CD8-positive, alpha-beta T cell (primary cell): ENCODE measurements at regions of chr11 and their contacts with region 1.

Region 1: GRCh38 chr11:14578541-14578956 is 58.4 kb upstream of the PSMA1 start:
- DNase-seq: peak; percentile 32 to 98 (median 74)
- ATAC-seq: peak; percentile 90
- H3K4me3 ChIP-seq: no peak overlapping the region
- H3K4me3 Mint-ChIP-seq: peak overlapping the region; percentile 56
- H3K27ac ChIP-seq: peak overlapping the region; percentile 58 to 85
- H3K27ac Mint-ChIP-seq: peak overlapping the region; percentile 96
- H3K4me1 ChIP-seq: peaks cover 42% of the 10 kb centered on the region
- H3K4me1 Mint-ChIP-seq: peaks cover 64% of the 10 kb centered on the region
- H3K27me3 ChIP-seq: no peaks in the 10 kb centered on the region
- H3K27me3 Mint-ChIP-seq: no peaks in the 10 kb centered on the region
- CTCF ChIP-seq: no peak

Region 2: DNA sequence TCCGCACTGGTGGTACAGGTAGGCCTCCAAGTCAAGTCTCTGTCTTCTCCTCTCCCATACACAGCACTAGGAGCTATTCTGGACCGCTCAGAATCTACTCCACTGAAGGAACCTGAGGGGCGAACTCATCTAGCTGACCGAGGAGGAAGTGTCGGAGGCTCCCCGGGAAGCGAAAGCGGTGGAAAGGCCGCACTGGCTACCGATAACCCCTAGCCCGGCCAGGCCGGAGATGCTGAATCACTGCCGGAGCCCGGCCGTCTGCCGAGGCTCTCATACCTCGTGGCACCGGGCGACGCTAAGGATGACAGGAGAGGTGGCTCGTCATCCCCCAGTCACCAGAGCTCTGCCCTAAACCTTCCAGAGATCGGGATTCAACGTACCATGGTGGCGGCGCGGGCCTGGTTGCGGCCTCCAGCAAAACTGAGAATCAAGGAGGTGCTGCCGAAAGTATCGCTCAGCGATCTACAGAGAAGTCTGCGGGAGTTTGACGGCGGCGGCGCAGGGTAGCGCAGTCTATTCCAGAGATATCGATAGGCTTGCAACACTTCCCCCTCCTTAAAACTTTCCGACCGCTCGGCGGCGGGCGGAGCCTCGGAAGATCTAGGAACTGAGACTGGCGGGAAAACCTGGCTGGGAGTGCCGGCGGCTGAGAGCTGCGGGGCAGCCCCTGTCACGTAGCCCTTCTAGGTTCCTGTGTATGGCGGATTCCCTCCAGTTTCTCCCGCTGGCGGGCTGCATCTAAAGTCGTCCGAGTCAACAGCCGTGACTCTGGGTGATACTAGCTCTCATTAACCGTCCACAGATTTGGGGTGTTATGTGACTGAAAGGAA is 58.4 kb before region 1 on chr11 and contains the start of gene PSMA1:
- CTCF ChIA-PET with region 1: interaction called, 3 read pairs
- POLR2A ChIA-PET with region 1: no interaction called
- intact Hi-C with region 1: loop called in 1 of 2 experiments (anchors 2 kb)
- DNase-seq: peak; percentile 74 to 95 (median 90)
- ATAC-seq: peak; percentile 90
- H3K4me3 ChIP-seq: peak within 1 kb of the TSS; percentile 82 to 84
- H3K4me3 Mint-ChIP-seq: peak within 1 kb of the TSS; percentile 98
- H3K27ac ChIP-seq: peak within 1 kb of the TSS; percentile 82 to 87
- H3K27ac Mint-ChIP-seq: peak within 1 kb of the TSS; percentile 97
- H3K4me1 ChIP-seq: peaks cover 19% of the 10 kb centered on the region
- H3K4me1 Mint-ChIP-seq: peaks cover 32% of the 10 kb centered on the region
- H3K27me3 ChIP-seq: no peaks in the 10 kb centered on the region
- H3K27me3 Mint-ChIP-seq: no peaks in the 10 kb centered on the region
- CTCF ChIP-seq: no peak
- total RNA-seq, gene PSMA1: 177 to 193 TPM

Region 3: DNA sequence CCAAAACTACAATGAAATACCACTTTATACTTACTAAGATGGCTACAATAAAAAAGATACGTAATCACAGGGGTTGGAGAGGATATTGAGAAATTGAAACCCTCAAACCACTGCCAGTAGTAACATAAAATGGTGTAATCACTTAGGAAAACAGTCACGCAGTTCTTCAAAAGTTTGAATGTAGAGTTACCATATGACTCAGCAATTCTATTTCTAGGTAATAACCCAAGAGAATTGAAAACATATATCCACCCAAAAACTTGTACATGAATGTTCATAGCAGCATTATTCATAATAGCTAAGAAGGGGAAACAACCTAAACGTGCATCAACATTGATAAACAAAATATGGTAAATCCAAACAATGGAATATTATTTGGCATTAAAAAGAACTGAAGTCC is 33.9 kb before region 1 on chr11:
- CTCF ChIA-PET with region 1: interaction called, 6 read pairs
- POLR2A ChIA-PET with region 1: interaction called, 5 read pairs
- intact Hi-C with region 1: loop called in 1 of 2 experiments (anchors 5 kb)
- DNase-seq: peak in 2 of 9 experiments; percentile 5 to 26
- ATAC-seq: no peak
- H3K4me3 ChIP-seq: no peak overlapping the region
- H3K4me3 Mint-ChIP-seq: no peak overlapping the region
- H3K27ac ChIP-seq: no peak overlapping the region
- H3K27ac Mint-ChIP-seq: no peak overlapping the region
- H3K4me1 ChIP-seq: peaks cover 10% of the 10 kb centered on the region
- H3K4me1 Mint-ChIP-seq: peaks cover 35% of the 10 kb centered on the region
- H3K27me3 ChIP-seq: no peaks in the 10 kb centered on the region
- H3K27me3 Mint-ChIP-seq: no peaks in the 10 kb centered on the region
- CTCF ChIP-seq: no peak

Region 4: DNA sequence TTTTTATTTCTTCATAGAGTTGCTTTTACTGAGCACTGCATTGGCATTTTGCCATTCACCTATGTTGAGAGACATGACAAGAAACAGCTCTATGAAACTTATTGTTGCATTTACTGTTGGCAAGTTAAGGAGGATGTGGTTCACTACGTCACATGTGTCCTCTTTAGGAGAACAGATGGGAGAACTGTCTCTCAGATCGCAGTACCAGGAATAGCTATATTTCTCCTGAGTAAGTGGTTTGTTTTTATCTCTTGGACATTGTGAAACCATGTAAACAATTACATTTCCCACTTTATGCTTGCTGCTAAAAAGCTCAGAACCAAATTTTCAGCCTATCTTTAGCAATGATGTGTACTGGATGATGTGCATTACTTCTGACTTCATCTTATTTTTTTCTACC is 23.6 kb before region 1 on chr11:
- CTCF ChIA-PET with region 1: interaction called, 3 read pairs
- POLR2A ChIA-PET with region 1: interaction called, 15 read pairs
- intact Hi-C with region 1: loop called (anchors 1 kb)
- DNase-seq: peak in 4 of 9 experiments; percentile 46 to 90 (median 70)
- ATAC-seq: peak; percentile 87
- H3K4me3 ChIP-seq: no peak overlapping the region
- H3K4me3 Mint-ChIP-seq: no peak overlapping the region
- H3K27ac ChIP-seq: peak overlapping the region; percentile 53 to 67
- H3K27ac Mint-ChIP-seq: peak overlapping the region; percentile 97
- H3K4me1 ChIP-seq: peaks cover 33% of the 10 kb centered on the region
- H3K4me1 Mint-ChIP-seq: peaks cover 51% of the 10 kb centered on the region
- H3K27me3 ChIP-seq: no peaks in the 10 kb centered on the region
- H3K27me3 Mint-ChIP-seq: no peaks in the 10 kb centered on the region
- CTCF ChIP-seq: no peak

Region 5: DNA sequence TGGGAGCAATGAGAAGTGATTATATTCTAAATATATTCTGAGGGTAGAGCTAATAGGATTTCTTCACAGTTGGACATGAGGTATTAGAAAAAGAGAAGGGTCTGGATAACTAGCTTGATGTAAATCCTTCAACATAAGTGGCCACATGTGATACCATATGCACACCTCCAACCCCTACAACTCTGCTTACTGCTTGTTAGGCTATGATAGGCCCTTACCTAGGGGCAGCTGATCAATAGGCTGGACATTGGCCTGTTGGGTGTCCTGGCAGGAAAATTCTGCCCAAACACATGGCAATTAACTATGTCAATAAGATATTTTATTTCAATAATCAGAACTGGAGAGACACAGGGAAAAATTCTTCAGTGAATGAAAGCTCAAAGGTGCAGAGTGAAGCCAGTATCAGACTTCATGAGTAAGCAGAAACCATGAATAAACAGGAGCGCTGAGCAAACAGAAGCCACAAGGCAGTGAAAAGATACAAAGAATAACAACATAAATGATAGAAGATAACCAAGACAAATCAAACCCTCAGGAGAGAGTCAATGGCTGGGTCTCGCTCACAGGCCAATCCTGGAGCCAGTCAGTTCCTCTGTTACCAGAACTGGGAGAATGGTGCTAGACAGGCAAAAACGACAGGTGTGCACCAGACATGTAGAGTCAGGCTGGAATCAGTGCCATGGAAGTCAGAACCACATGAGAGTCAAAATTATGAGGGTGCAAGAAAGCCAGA is 12.1 kb before region 1 on chr11:
- CTCF ChIA-PET with region 1: interaction called, 9 read pairs
- POLR2A ChIA-PET with region 1: interaction called, 15 read pairs
- intact Hi-C with region 1: loop called in 1 of 2 experiments (anchors 1 kb)
- DNase-seq: no peak
- ATAC-seq: no peak
- H3K4me3 ChIP-seq: no peak overlapping the region
- H3K4me3 Mint-ChIP-seq: no peak overlapping the region
- H3K27ac ChIP-seq: no peak overlapping the region
- H3K27ac Mint-ChIP-seq: peak overlapping the region; percentile 66
- H3K4me1 ChIP-seq: peaks cover 40% of the 10 kb centered on the region
- H3K4me1 Mint-ChIP-seq: peaks cover 69% of the 10 kb centered on the region
- H3K27me3 ChIP-seq: no peaks in the 10 kb centered on the region
- H3K27me3 Mint-ChIP-seq: no peaks in the 10 kb centered on the region
- CTCF ChIP-seq: no peak

Region 6: DNA sequence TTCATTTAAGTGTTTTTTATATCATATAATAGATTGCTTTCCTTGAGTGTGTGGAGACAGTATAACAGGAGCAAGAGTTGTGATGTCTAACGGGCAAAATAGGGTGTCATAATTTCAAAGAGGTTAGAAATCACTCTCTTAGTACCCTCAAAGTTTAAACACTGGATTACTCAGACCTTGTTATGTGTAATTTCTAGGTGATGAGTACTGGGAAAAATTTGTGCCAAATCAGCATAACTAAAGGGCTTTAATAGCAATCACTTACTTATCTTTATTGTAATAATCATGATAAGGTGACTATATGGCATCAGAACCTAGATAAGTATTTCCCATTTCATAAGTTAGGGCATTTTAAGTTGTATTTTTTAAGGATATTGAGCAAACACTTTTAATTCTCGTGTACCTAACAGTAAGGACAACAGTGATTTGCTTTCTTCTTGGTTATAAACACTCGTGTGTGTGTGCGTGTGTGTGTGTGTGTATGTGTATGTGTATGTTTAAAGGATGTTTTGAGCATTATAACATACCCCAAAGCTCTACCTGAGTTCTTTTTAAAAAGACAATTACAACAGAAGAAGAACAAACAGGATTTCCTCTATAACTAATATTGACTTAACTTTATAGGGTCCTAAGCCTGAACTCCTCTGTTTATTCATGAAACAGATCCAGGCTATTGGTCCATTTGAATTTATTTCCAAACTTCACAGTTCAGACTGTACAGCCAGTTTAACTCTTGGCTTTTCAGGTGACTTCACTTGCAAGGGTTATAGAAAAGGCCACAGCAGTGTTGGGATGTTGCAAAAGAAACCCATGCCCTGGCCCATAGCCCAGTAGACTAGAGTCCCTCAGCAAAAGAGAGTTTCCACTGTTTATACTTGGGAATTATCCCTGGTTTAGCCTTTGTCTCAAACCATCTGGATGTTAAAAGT is 41.3 kb after region 1 on chr11:
- CTCF ChIA-PET with region 1: interaction called, 5 read pairs
- POLR2A ChIA-PET with region 1: interaction called, 4 read pairs
- intact Hi-C with region 1: loop called in 1 of 2 experiments (anchors 5 kb)
- DNase-seq: no peak
- ATAC-seq: no peak
- H3K4me3 ChIP-seq: no peak overlapping the region
- H3K4me3 Mint-ChIP-seq: no peak overlapping the region
- H3K27ac ChIP-seq: no peak overlapping the region
- H3K27ac Mint-ChIP-seq: peak overlapping the region; percentile 61
- H3K4me1 ChIP-seq: peaks cover 33% of the 10 kb centered on the region
- H3K4me1 Mint-ChIP-seq: peaks cover 84% of the 10 kb centered on the region
- H3K27me3 ChIP-seq: no peaks in the 10 kb centered on the region
- H3K27me3 Mint-ChIP-seq: no peaks in the 10 kb centered on the region
- CTCF ChIP-seq: no peak

Region 7: DNA sequence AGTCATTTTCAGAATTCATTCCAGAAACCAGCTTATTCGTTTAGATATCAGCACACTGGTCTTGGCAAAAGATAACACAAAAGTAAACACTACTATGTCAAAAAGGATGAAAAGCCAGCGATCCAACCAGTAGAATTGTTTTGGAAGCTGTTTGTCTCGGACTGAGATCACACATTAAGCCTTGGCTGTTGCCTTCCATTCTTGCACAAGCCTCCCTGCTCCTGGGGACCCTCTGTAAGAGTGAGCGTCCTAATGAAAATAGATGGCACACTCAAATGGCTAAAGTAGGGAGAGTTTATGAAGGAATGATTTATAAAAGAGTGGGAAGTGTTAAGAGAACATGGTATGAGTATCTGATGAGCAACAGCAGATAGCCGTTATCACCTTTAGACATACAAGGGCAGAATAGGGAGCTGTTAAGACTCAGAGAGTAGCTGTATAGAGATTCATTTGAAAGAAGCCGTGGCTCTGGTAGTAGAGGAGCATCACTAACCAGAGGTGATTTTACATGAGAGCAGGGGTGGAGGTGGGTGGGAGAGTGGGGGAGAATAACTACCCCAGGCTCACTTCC is 90.3 kb after region 1 on chr11:
- CTCF ChIA-PET with region 1: no interaction called
- POLR2A ChIA-PET with region 1: no interaction called
- intact Hi-C with region 1: no loop called
- DNase-seq: peak in 1 of 9 experiments; percentile 19
- ATAC-seq: peak; percentile 35
- H3K4me3 ChIP-seq: no peak overlapping the region
- H3K4me3 Mint-ChIP-seq: no peak overlapping the region
- H3K27ac ChIP-seq: no peak overlapping the region
- H3K27ac Mint-ChIP-seq: peak overlapping the region; percentile 10
- H3K4me1 ChIP-seq: peaks cover 4% of the 10 kb centered on the region
- H3K4me1 Mint-ChIP-seq: peaks cover 52% of the 10 kb centered on the region
- H3K27me3 ChIP-seq: no peaks in the 10 kb centered on the region
- H3K27me3 Mint-ChIP-seq: no peaks in the 10 kb centered on the region
- CTCF ChIP-seq: no peak

Region 8: DNA sequence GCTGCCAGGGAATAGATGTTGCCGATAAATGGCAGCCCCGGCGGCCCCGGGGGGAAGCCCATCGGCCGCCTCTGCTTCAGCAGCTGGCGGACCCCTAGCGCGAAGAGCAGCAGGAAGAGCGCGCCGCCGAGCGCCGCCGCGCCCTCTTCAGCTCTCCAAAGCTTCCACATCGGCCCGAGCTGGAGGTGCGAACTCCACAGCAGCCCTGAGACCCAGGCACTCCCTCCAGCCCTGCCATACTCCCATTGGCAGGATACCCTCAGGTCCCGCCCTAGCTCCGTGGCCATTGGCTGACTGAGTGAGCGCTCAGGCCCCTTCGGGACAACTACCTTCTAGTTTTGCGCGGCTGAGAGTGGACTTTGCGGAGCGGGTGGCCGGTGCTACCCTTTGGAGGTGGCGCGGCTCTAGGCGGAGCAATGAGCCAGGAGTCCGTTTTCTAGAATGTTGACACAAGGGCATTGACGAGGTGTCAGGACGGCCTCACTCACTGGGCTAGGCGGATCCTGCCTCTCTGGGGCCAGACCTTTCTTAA is 313.6 kb after region 1 on chr11 and contains the start of gene CYP2R1:
- CTCF ChIA-PET with region 1: no interaction called
- POLR2A ChIA-PET with region 1: interaction called, 3 read pairs
- intact Hi-C with region 1: loop called in 1 of 2 experiments (anchors 5 kb)
- DNase-seq: peak; percentile 81 to 95 (median 89)
- ATAC-seq: peak; percentile 74
- H3K4me3 ChIP-seq: peak within 1 kb of the TSS; percentile 68 to 75
- H3K4me3 Mint-ChIP-seq: peak within 1 kb of the TSS; percentile 88
- H3K27ac ChIP-seq: peak within 1 kb of the TSS; percentile 49 to 79
- H3K27ac Mint-ChIP-seq: peak within 1 kb of the TSS; percentile 93
- H3K4me1 ChIP-seq: peaks cover 10% of the 10 kb centered on the region
- H3K4me1 Mint-ChIP-seq: peaks cover 42% of the 10 kb centered on the region
- H3K27me3 ChIP-seq: no peaks in the 10 kb centered on the region
- H3K27me3 Mint-ChIP-seq: no peaks in the 10 kb centered on the region
- CTCF ChIP-seq: no peak
- total RNA-seq, gene CYP2R1: 10.7 to 12.6 TPM